ACHN (cell line): ENCODE measurements at regions of chr5 and their contacts with region 1.

Region 1: GRCh38 chr5:97162045-97162444 is 19.6 kb upstream of the LIX1 start:
- DNase-seq: peak; percentile 70

Region 2: DNA sequence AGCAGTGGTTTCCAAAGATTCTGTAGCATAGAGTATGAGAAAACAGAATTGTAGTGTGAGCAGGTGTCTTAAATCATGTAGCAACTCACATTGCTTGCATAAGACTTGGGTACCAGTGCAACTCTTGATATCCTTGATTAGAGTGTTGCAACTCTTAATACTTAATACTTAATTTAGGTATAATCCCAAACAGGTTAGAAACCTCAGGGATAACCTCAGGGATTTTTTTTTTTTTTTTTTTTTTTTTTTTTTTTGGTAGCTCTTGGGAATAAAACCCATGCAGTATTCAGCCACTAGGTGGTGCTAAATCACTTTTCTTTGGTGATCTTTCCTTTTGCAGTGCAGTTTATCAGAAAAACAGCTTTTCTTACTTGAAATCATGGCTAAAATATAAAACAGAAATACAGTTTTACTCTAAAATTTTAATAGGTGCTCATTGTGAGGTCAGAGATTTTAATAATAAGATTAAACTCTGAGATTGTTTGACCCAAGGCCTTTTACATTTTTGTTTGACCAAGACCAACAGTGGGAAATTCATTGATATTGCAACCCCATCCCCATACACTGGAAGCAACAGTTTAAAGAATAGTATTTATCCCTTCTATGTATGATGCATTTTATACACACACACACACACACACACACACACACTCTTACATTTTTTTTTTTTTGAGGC is 409.6 kb before region 1 on chr5:
- in situ Hi-C with region 1: loop called (anchors 25 kb)
- DNase-seq: peak; percentile 68

Region 3: DNA sequence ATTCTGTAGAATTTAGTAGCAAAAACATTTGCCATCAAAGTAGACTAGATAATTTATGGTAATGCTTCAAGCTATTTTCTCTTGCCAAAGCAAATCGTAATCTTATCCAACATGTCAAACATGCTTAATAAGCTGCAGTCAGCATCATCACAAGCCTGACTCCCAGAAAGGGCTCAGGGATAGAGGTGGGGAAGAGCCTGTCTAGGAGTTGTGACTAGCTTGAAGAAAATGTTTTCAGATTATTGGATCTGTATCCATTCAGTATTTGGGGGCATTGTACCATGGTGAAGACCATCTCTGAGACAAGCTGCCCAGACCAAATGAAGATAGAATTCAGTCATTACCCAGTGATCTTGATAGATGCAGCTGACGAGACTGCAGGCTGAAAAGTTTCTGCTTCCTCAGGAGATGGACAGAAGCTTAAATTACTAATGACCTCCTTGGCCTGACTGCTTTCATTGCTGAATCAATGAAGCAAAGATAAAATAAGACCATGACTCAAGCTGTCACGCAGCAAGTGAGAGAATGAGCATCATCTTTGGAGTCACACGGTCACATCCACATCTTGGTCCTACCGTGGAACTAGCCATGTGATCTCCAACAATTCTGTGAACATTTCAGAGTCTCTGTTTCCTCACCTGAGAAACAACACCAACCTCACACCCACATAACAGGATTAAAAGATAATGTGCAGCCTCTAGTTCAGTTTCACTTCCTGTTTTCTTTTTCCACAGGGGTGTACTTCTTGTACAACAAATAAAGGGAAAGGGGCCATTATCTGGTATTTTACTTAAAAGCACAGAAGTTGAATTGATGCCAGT is 276.3 kb before region 1 on chr5:
- in situ Hi-C with region 1: no loop called
- DNase-seq: peak; percentile 37

Region 4: GRCh38 chr5:97044052-97044451 is 118.0 kb before region 1 on chr5:
- in situ Hi-C with region 1: loop called (anchors 25 kb)
- DNase-seq: peak; percentile 53

Region 5: GRCh38 chr5:97489010-97489840 is 327.2 kb after region 1 on chr5:
- in situ Hi-C with region 1: no loop called
- DNase-seq: no peak

Region 6: GRCh38 chr5:97666773-97667172 is 504.7 kb after region 1 on chr5:
- in situ Hi-C with region 1: no loop called
- DNase-seq: no peak